H1 (cell line): ENCODE measurements at regions of chr11 and their contacts with region 1.

Region 1: DNA sequence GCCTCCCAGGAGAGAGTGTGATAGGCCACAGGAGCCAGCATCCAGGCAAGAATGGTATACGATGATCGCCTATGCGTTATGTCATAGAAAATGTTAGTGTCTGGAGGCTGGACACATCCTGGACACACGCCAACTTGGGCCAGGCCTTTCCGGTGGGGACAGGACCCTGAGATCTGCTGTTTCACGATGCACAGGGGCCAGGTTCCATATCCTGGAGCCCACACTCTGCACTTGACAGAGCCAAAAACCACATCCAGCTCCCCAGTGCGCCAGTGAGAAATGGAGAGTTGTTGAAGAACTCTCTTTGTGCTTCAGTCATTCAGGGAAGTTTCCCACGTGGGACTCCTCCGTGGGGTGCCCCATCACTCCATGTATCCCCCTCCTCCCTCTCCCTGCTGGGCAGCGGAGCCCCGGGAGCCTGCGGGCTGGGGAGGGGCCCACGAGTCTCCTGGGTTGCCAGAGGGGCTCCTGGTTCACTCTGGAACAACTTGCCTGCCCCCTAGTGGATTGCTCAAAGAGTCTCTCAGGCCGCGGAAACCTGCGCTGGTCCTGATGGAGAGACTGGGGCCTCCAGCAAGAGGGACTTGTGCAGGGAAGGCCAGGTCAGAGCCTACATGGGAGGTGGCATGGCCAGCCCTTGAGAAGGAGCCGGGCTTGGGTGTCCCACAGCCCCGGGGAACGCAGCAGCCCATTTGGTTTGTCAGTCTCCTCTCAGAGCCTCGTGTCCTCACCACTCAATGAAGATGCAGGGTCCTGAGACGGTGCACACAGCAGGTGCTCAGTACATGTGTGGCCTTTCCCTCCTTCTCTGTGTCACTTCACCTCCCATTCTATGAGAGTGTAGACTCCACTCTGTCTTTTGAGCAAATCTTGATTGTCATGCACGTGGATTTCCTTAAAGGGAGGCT is 10.2 kb upstream of the LRRC32 start:
- DNase-seq: peak; percentile 49 to 89
- H3K4me3 ChIP-seq: no peak overlapping the region
- H3K27ac ChIP-seq: no peak overlapping the region
- H3K4me1 ChIP-seq: peaks cover 0 to 2% (median 2%) of the 10 kb centered on the region in 4 experiments; a peak in 6 of 7 replicates
- H3K27me3 ChIP-seq: no peaks in the 10 kb centered on the region; a peak in 2 of 7 replicates
- CTCF ChIP-seq: peak; percentile 73 to 93 (median 84)
- EP300 ChIP-seq: no peak
- POLR2A ChIP-seq: no peak
- RAD21 ChIP-seq: peak; percentile 94 to 98

Region 2: DNA sequence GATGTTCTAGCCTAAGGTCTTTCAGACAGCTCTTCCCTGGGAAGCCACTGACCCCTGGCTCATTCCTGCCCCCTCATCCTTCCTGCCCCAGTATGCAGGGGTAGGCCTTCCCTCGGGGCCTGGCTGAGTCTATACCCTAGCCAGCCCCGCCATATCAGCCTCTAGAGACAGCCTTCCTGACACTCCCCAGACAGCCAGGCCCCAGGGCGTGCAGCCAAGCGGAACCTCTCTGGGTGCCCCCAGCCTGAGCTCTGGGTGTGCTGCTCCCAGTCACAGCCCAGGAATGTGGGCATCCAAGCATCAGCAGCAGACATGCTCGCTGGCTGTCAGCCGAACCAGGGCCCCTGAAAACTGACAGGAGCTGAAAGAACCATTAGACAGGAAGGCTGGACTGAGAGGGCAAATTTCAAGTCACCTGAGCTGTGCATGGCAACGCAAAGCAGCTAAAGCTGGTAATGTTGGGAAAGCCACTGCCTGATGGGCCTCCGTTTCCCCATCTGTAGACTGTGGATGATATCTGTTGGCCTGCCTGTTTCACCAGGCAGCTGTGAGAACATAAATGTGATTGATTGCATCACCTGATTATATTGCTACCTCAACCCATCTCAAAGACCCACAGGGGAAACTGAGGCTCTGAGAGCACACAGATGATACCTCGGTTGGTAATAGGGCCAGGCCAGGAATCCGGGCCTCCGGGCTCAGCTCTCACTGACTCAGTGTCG is 103.4 kb before region 1 on chr11:
- CTCF ChIA-PET with region 1: interaction called, 62 read pairs
- POLR2A ChIA-PET with region 1: no interaction called
- DNase-seq: no peak
- H3K4me3 ChIP-seq: no peak overlapping the region
- H3K27ac ChIP-seq: no peak overlapping the region
- H3K4me1 ChIP-seq: peaks cover 0 to 11% (median 2%) of the 10 kb centered on the region in 4 experiments; a peak in 5 of 7 replicates
- H3K27me3 ChIP-seq: no peaks in the 10 kb centered on the region
- CTCF ChIP-seq: no peak
- EP300 ChIP-seq: no peak
- POLR2A ChIP-seq: no peak
- RAD21 ChIP-seq: no peak

Region 3: GRCh38 chr11:76694664-76695063 is 13.9 kb after region 1 on chr11:
- CTCF ChIA-PET with region 1: interaction called, 10 read pairs
- POLR2A ChIA-PET with region 1: no interaction called
- DNase-seq: no peak
- H3K4me3 ChIP-seq: no peak overlapping the region
- H3K27ac ChIP-seq: no peak overlapping the region
- H3K4me1 ChIP-seq: peaks cover 6 to 12% (median 8%) of the 10 kb centered on the region in 4 experiments
- H3K27me3 ChIP-seq: no peaks in the 10 kb centered on the region
- CTCF ChIP-seq: no peak
- EP300 ChIP-seq: no peak
- POLR2A ChIP-seq: no peak
- RAD21 ChIP-seq: no peak